ENCODE measurements at regions of chr5 and their contacts with region 1.

Region 1: DNA sequence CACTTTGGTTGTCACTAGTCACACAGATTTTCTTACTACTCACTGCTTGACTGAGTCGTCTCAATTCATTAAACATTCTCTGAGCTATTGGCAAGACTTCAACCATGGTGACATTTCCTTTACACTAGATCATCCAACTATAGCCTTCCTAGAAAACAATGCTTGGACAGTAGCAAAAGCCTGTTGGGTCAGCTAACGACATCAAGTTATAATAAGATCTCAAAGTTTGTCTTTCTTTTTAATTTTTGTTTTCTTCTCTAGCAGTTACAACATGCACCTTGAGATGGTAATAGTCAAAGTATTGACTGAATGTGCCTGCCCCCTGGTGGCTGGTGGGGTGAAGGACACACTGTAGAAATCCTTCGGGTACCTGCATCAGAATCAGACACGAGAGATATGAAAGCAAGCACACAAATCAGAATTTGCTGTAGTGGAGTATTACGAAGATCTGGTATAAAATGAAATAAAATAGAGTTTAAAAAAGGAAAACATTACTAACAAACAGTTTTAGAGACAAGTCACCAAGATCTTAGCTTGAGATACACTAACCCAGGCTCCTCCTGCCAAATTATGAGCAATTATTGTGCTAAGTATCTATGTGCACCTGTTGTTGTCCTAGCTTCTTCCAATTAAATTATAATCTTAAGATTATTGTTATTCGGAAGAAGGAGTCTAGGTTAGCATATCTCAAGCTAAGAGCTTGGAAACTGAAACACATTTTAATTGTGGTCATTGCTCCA is 81.2 kb downstream of the ARL15 start:
- DNase-seq: peak; percentile 43 to 59 (median 58)
- H3K4me3 ChIP-seq: no peak overlapping the region
- H3K4me3 Mint-ChIP-seq: peak overlapping the region in 2 of 8 donors; percentile 31 to 68
- H3K27ac ChIP-seq: no peak overlapping the region
- H3K27ac Mint-ChIP-seq: peak overlapping the region in 2 of 7 donors; percentile 2 to 11
- H3K4me1 ChIP-seq: no peaks in the 10 kb centered on the region
- H3K4me1 Mint-ChIP-seq: peaks cover 5 to 18% (median 15%) of the 10 kb centered on the region in 4 donors
- H3K27me3 ChIP-seq: no peaks in the 10 kb centered on the region
- H3K27me3 Mint-ChIP-seq: no peaks in the 10 kb centered on the region

Region 2: GRCh38 chr5:53123702-53124101 is 1105.5 kb before region 1 on chr5:
- CTCF ChIA-PET with region 1: interaction called, 3 read pairs
- POLR2A ChIA-PET with region 1: no interaction called
- intact Hi-C with region 1: loop called (anchors 2 kb)
- DNase-seq: no peak
- H3K4me3 ChIP-seq: no peak overlapping the region
- H3K4me3 Mint-ChIP-seq: no peak overlapping the region
- H3K27ac ChIP-seq: no peak overlapping the region
- H3K27ac Mint-ChIP-seq: no peak overlapping the region
- H3K4me1 ChIP-seq: no peaks in the 10 kb centered on the region
- H3K4me1 Mint-ChIP-seq: no peaks in the 10 kb centered on the region
- H3K27me3 ChIP-seq: no peaks in the 10 kb centered on the region
- H3K27me3 Mint-ChIP-seq: peaks cover 0 to 2% of the 10 kb centered on the region in 2 donors

Region 3: DNA sequence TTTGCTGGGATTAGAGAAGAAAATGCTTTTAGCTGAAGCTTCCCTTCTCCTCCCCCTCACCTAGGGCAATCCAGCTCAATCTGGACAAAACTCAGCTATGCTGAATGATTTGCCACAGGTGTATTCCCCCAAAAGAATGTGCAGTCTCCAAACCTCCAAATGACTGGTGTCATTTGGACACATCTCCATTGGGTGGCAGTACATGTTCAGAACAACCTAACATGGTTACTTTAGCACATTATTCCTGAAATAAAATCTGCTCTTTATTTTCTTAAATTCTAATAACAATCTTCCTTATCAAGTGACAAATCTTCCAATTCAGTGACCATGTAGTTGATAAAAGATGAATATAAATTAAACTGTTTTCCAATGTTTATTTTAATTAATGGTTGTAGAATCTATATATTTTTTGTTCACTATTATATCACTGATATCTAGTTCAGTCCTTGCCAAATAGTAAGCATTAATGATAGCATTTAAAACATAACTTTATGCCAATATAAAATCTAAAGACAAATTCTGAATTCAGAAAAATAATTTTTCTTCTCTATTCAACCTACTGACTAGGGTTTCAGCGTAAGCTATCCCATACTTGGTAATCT is 1058.4 kb before region 1 on chr5:
- CTCF ChIA-PET with region 1: no interaction called
- POLR2A ChIA-PET with region 1: no interaction called
- intact Hi-C with region 1: loop called (anchors 1 kb)
- DNase-seq: peak in 1 of 5 donors; percentile 10
- H3K4me3 ChIP-seq: no peak overlapping the region
- H3K4me3 Mint-ChIP-seq: no peak overlapping the region
- H3K27ac ChIP-seq: no peak overlapping the region
- H3K27ac Mint-ChIP-seq: no peak overlapping the region
- H3K4me1 ChIP-seq: no peaks in the 10 kb centered on the region
- H3K4me1 Mint-ChIP-seq: no peaks in the 10 kb centered on the region
- H3K27me3 ChIP-seq: no peaks in the 10 kb centered on the region
- H3K27me3 Mint-ChIP-seq: peaks cover 4% of the 10 kb centered on the region in 2 donors

Region 4: GRCh38 chr5:54243473-54244080 is 14.4 kb after region 1 on chr5:
- CTCF ChIA-PET with region 1: interaction called, 16 read pairs
- POLR2A ChIA-PET with region 1: interaction called, 3 read pairs
- intact Hi-C with region 1: no loop called
- DNase-seq: peak in 4 of 5 donors; percentile 21 to 36 (median 28)
- H3K4me3 ChIP-seq: no peak overlapping the region
- H3K4me3 Mint-ChIP-seq: no peak overlapping the region
- H3K27ac ChIP-seq: no peak overlapping the region
- H3K27ac Mint-ChIP-seq: no peak overlapping the region
- H3K4me1 ChIP-seq: no peaks in the 10 kb centered on the region
- H3K4me1 Mint-ChIP-seq: peaks cover 3 to 9% (median 6%) of the 10 kb centered on the region in 4 donors
- H3K27me3 ChIP-seq: no peaks in the 10 kb centered on the region
- H3K27me3 Mint-ChIP-seq: no peaks in the 10 kb centered on the region

Region 5: GRCh38 chr5:54329731-54330709 is 100.8 kb after region 1 on chr5:
- CTCF ChIA-PET with region 1: no interaction called
- POLR2A ChIA-PET with region 1: no interaction called
- intact Hi-C with region 1: no loop called
- DNase-seq: no peak
- H3K4me3 ChIP-seq: no peak overlapping the region
- H3K4me3 Mint-ChIP-seq: no peak overlapping the region
- H3K27ac ChIP-seq: no peak overlapping the region
- H3K27ac Mint-ChIP-seq: no peak overlapping the region
- H3K4me1 ChIP-seq: no peaks in the 10 kb centered on the region
- H3K4me1 Mint-ChIP-seq: peaks cover 0 to 2% (median 0%) of the 10 kb centered on the region in 4 donors
- H3K27me3 ChIP-seq: no peaks in the 10 kb centered on the region
- H3K27me3 Mint-ChIP-seq: peaks cover 16 to 29% of the 10 kb centered on the region in 2 donors

Measured in CD4-positive, alpha-beta memory T cell (primary cell).